Activated T-helper 1 cell treated with anti-CD3 and anti-CD28 coated beads, Interleukin-12 subunit alpha, Interleukin-12 subunit beta, Interleukin-2, Interleukin-4 antibody, amounts not matched to agents 30 ng/mL and 10 ng/mL and 1 ng/mL, durations not matched to agents 14 hours and 24 hours and 36 hours (primary cell): ENCODE measurements at regions of chr12 and their contacts with region 1.

Region 1: DNA sequence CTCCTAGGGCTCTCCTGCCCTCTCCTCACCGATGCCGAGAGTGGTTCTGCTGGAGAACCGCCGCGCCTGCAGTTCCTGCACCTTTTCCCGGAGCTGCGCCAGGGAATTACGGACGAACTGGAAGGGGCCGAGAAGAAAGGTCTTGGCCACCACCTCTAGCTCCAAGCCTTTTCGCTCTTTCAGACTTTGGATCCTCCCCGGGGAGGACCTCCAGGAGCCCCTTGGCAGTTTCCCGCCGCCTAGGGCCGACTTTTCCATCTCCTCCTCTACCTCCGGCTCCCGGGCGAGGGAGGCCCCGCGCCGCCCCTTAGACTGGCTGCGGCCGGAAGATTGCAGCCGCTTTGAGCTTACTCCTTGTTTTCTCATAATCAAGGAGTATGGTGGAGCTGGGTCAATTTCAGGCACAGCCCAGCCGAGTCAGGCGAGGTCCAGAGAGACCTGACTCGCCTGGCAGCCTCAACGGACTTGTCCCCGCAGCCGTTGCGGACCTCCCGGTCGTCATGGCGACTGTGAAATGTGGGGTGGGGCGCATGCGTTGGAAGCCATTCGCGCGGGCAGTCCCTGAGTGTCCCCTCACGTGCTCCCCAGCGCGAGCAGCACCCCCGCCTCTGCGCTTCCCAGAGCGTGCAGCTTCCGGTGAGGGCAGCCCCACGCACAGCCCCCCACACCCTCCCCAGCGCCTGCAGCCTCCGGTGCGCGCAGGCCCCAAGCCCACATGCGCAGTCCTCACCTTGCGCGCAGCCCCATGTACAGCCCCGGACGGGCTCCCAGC is at the start of gene DPY19L2:
- DNase-seq: peak; percentile 11
- H3K4me3 Mint-ChIP-seq: peak within 1 kb of the TSS; percentile 79
- H3K27ac Mint-ChIP-seq: no peak within 1 kb of the TSS
- H3K4me1 Mint-ChIP-seq: peaks cover 5% of the 10 kb centered on the region
- H3K27me3 Mint-ChIP-seq: peaks cover 42% of the 10 kb centered on the region
- total RNA-seq, gene DPY19L2: 0.22 and 0.36 TPM in 2 replicates

Region 2: DNA sequence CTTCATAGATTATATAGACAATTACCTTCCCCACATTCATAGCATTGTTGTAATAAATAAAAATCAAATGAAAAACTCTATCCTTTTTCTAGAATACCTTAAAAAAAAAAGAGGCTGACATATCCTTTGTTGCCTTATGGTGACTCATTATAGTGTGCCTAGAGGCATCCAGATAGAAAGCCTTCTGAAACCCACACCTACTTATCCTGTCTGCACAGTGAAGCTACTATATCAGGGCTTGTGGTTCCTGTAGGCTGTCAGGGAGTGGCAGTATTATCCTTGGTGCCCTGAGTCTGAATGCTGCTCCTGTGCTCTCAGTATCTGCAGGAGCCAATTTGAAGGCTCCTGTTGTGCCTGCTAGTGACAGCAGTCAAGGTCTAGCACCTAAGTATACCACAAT is 348.9 kb before region 1 on chr12:
- intact Hi-C with region 1: no loop called
- DNase-seq: no peak
- H3K4me3 Mint-ChIP-seq: no peak overlapping the region
- H3K27ac Mint-ChIP-seq: no peak overlapping the region
- H3K4me1 Mint-ChIP-seq: no peaks in the 10 kb centered on the region
- H3K27me3 Mint-ChIP-seq: peaks cover 7% of the 10 kb centered on the region

Region 3: GRCh38 chr12:63802012-63802608 is 133.9 kb after region 1 on chr12:
- intact Hi-C with region 1: loop called (anchors 1 kb)
- DNase-seq: no peak
- H3K4me3 Mint-ChIP-seq: no peak overlapping the region
- H3K27ac Mint-ChIP-seq: no peak overlapping the region
- H3K4me1 Mint-ChIP-seq: no peaks in the 10 kb centered on the region
- H3K27me3 Mint-ChIP-seq: no peaks in the 10 kb centered on the region